ENCODE measurements at regions of chr10 and their contacts with region 1.

Region 1: DNA sequence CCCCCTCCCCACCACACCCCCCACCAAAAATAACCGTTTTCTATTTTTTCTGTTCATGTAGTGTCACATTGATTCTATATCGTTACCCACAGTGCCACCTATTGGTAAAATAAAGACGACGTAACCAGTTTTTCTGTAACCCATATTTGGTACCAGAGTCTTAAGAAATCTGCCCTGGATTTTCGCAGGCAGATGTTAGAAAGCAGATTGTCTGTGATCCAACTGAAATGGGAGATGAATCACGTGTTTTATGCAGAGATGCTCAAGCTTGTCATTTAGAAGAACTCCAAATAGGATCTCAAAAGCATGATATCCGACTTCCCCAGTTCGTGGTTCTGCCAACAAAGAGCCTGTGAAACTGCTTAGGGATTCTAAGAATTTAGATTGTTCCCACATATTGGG is 261.1 kb upstream of the CSTF2T start:
- DNase-seq: no peak
- H3K4me3 ChIP-seq: no peak overlapping the region
- CTCF ChIP-seq: peak; percentile 36

Region 2: GRCh38 chr10:50990568-50991185 is 969.8 kb before region 1 on chr10:
- CTCF ChIA-PET with region 1: interaction called, 11 read pairs
- POLR2A ChIA-PET with region 1: no interaction called
- DNase-seq: peak; percentile 83
- H3K4me3 ChIP-seq: peak overlapping the region; percentile 88
- CTCF ChIP-seq: no peak

Region 3: DNA sequence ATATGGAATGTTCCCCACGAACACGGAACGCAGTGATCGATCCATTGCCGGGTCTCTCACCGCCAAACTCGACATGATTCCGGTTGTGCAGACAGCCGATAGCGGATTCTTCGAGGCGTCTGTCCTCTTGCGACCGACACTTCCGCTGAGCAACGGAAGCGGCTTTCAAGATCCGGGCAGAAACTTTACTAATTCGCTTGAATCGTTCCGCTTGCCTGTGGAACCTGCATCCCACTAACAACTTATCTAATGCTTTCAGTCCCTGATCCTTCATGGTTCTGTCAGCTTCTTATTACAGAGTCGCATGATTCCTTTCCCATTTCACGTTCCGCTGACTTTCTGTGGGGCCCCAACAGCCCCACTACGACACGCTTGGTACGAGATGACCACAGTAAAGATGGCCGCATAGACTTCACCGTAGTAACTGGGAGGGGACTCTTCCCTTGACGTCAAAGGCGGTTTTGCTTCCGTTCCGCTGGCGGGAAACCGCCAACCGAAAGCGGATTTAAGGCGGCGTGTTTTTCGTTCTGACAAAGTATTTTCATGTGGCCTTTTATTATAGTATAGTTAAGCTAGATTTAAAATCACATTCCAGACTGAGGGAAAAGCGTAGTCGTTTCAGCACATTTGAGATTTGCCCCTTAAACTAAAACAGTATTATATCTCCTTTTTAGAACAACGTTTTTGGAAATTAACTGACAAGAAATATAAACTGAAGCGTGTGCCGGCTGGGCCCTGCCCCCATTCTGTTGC is 260.8 kb before region 1 on chr10 and contains the start of gene CSTF2T:
- CTCF ChIA-PET with region 1: interaction called, 23 read pairs
- POLR2A ChIA-PET with region 1: no interaction called
- DNase-seq: peak; percentile 75
- H3K4me3 ChIP-seq: peak within 1 kb of the TSS; percentile 86
- CTCF ChIP-seq: no peak

Region 4: GRCh38 chr10:51857305-51857704 is 103.2 kb before region 1 on chr10:
- CTCF ChIA-PET with region 1: no interaction called
- POLR2A ChIA-PET with region 1: no interaction called
- DNase-seq: no peak
- H3K4me3 ChIP-seq: no peak overlapping the region
- CTCF ChIP-seq: no peak

Region 5: GRCh38 chr10:51937308-51938135 is 23.0 kb before region 1 on chr10:
- CTCF ChIA-PET with region 1: interaction called, 10 read pairs
- POLR2A ChIA-PET with region 1: no interaction called
- DNase-seq: peak; percentile 52
- H3K4me3 ChIP-seq: no peak overlapping the region; the same call in 1 of the 2 replicates
- CTCF ChIP-seq: no peak

Region 6: GRCh38 chr10:51972733-51973346 is 12.3 kb after region 1 on chr10:
- CTCF ChIA-PET with region 1: interaction called, 16 read pairs
- POLR2A ChIA-PET with region 1: no interaction called
- DNase-seq: no peak
- H3K4me3 ChIP-seq: no peak overlapping the region
- CTCF ChIP-seq: no peak

Measured in AG04449 (cell line).